ENCODE measurements at regions of chr10 and their contacts with region 1.

Region 1: GRCh38 chr10:13099666-13100348 is at the start of gene OPTN:
- DNase-seq: peak; percentile 62 to 93 (median 79)
- ATAC-seq: peak; percentile 75
- H3K4me3 ChIP-seq: peak within 1 kb of the TSS; percentile 62 to 89
- H3K4me3 Mint-ChIP-seq: peak within 1 kb of the TSS; percentile 92
- H3K27ac ChIP-seq: peak within 1 kb of the TSS; percentile 69 to 94
- H3K27ac Mint-ChIP-seq: peak within 1 kb of the TSS; percentile 98
- H3K4me1 ChIP-seq: peaks cover 6% of the 10 kb centered on the region
- H3K4me1 Mint-ChIP-seq: peaks cover 46% of the 10 kb centered on the region
- H3K27me3 ChIP-seq: no peaks in the 10 kb centered on the region
- H3K27me3 Mint-ChIP-seq: no peaks in the 10 kb centered on the region
- CTCF ChIP-seq: peak; percentile 57
- total RNA-seq, gene OPTN: 66.3 to 71.6 TPM

Region 2: GRCh38 chr10:11782793-11783557 is 1316.8 kb before region 1 on chr10:
- CTCF ChIA-PET with region 1: no interaction called
- POLR2A ChIA-PET with region 1: no interaction called
- intact Hi-C with region 1: loop called in 1 of 2 experiments (anchors 10 kb)
- DNase-seq: peak in 2 of 9 experiments; percentile 50 to 62
- ATAC-seq: peak; percentile 71
- H3K4me3 ChIP-seq: no peak overlapping the region
- H3K4me3 Mint-ChIP-seq: no peak overlapping the region
- H3K27ac ChIP-seq: no peak overlapping the region
- H3K27ac Mint-ChIP-seq: no peak overlapping the region
- H3K4me1 ChIP-seq: no peaks in the 10 kb centered on the region
- H3K4me1 Mint-ChIP-seq: no peaks in the 10 kb centered on the region
- H3K27me3 ChIP-seq: no peaks in the 10 kb centered on the region
- H3K27me3 Mint-ChIP-seq: peaks cover 11% of the 10 kb centered on the region
- CTCF ChIP-seq: peak; percentile 63

Region 3: GRCh38 chr10:12264204-12264940 is 835.4 kb before region 1 on chr10:
- CTCF ChIA-PET with region 1: no interaction called
- POLR2A ChIA-PET with region 1: no interaction called
- intact Hi-C with region 1: loop called in 1 of 2 experiments (anchors 1 kb)
- DNase-seq: peak; percentile 30 to 83 (median 67)
- ATAC-seq: peak; percentile 76
- H3K4me3 ChIP-seq: peak overlapping the region; percentile 35 to 36
- H3K4me3 Mint-ChIP-seq: peak overlapping the region; percentile 72
- H3K27ac ChIP-seq: no peak overlapping the region
- H3K27ac Mint-ChIP-seq: peak overlapping the region; percentile 64
- H3K4me1 ChIP-seq: no peaks in the 10 kb centered on the region
- H3K4me1 Mint-ChIP-seq: peaks cover 14% of the 10 kb centered on the region
- H3K27me3 ChIP-seq: no peaks in the 10 kb centered on the region
- H3K27me3 Mint-ChIP-seq: no peaks in the 10 kb centered on the region
- CTCF ChIP-seq: peak; percentile 70

Region 4: DNA sequence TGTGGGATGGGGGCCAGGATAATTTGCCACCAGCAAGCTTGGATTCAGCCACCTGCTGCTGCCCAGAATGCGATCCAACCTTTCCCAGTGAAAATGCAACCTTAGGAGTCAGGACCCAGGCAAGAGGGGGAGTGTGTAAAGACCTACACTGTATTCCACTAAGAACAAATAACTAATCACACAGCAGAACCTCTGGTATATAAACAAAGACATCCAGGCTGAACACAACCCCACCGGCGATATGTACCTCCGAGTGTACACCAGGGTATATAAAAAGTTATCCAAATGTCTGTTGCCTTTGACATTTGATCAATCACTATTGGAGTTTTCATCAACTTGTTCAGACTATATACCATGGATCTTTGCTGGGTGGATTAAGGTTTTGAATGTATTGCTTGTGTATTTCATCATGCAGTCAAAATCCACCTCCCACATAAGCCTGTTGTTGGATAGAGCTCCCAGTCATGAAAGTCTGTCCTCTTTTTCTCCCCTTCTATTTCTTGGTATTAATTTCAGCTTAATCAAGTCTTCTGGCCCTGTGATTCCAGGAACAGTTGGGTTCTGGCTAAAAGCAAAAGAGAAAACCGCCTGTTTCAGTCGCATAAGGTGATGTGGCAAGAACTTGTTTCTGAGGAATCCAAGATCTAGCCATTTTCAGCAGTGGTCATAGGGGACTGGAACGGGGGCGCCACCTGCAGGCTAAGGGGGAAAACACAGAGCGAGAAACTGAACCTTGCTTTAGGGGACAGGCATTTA is 389.0 kb before region 1 on chr10:
- CTCF ChIA-PET with region 1: interaction called, 4 read pairs
- POLR2A ChIA-PET with region 1: no interaction called
- intact Hi-C with region 1: loop called (anchors 10 kb)
- DNase-seq: peak; percentile 56 to 83 (median 73)
- ATAC-seq: peak; percentile 93
- H3K4me3 ChIP-seq: no peak overlapping the region
- H3K4me3 Mint-ChIP-seq: no peak overlapping the region
- H3K27ac ChIP-seq: no peak overlapping the region
- H3K27ac Mint-ChIP-seq: no peak overlapping the region
- H3K4me1 ChIP-seq: no peaks in the 10 kb centered on the region
- H3K4me1 Mint-ChIP-seq: peaks cover 4% of the 10 kb centered on the region
- H3K27me3 ChIP-seq: no peaks in the 10 kb centered on the region
- H3K27me3 Mint-ChIP-seq: no peaks in the 10 kb centered on the region
- CTCF ChIP-seq: peak; percentile 90

Region 5: GRCh38 chr10:13160934-13161856 is 61.4 kb after region 1 on chr10 and contains the start of gene MCM10:
- CTCF ChIA-PET with region 1: interaction called, 14 read pairs
- POLR2A ChIA-PET with region 1: no interaction called
- intact Hi-C with region 1: loop called (anchors 1 to 5 kb)
- DNase-seq: peak; percentile 93 to 99 (median 98)
- ATAC-seq: peak; percentile 100
- H3K4me3 ChIP-seq: peak within 1 kb of the TSS; percentile 44 to 49
- H3K4me3 Mint-ChIP-seq: peak within 1 kb of the TSS; percentile 88
- H3K27ac ChIP-seq: peak within 1 kb of the TSS in 1 of 2 experiments; percentile 40
- H3K27ac Mint-ChIP-seq: peak within 1 kb of the TSS; percentile 86
- H3K4me1 ChIP-seq: peaks cover 10% of the 10 kb centered on the region
- H3K4me1 Mint-ChIP-seq: peaks cover 14% of the 10 kb centered on the region
- H3K27me3 ChIP-seq: no peaks in the 10 kb centered on the region
- H3K27me3 Mint-ChIP-seq: no peaks in the 10 kb centered on the region
- CTCF ChIP-seq: peak; percentile 96
- total RNA-seq, gene MCM10: 0.08 to 0.19 TPM

Region 6: GRCh38 chr10:13348216-13349017 is 248.6 kb after region 1 on chr10 and contains the start of gene SEPHS1:
- CTCF ChIA-PET with region 1: interaction called, 5 read pairs
- POLR2A ChIA-PET with region 1: interaction called, 3 read pairs
- intact Hi-C with region 1: loop called (anchors 1 to 5 kb)
- DNase-seq: peak; percentile 51 to 89 (median 79)
- ATAC-seq: peak; percentile 67
- H3K4me3 ChIP-seq: peak within 1 kb of the TSS; percentile 83 to 93
- H3K4me3 Mint-ChIP-seq: peak within 1 kb of the TSS; percentile 96
- H3K27ac ChIP-seq: peak within 1 kb of the TSS; percentile 65 to 82
- H3K27ac Mint-ChIP-seq: peak within 1 kb of the TSS; percentile 94
- H3K4me1 ChIP-seq: peaks cover 48% of the 10 kb centered on the region
- H3K4me1 Mint-ChIP-seq: peaks cover 61% of the 10 kb centered on the region
- H3K27me3 ChIP-seq: no peaks in the 10 kb centered on the region
- H3K27me3 Mint-ChIP-seq: no peaks in the 10 kb centered on the region
- CTCF ChIP-seq: no peak
- total RNA-seq, gene SEPHS1: 16.9 to 19.2 TPM

Measured in CD8-positive, alpha-beta T cell (primary cell).